Astrocyte of the cerebellum (primary cell): ENCODE measurements at regions of chr14 and their contacts with region 1.

Region 1: GRCh38 chr14:33529787-33530757 is 420.8 kb downstream of the EGLN3 start:
- DNase-seq: no peak
- H3K4me3 ChIP-seq: no peak overlapping the region
- CTCF ChIP-seq: no peak

Region 2: GRCh38 chr14:33165144-33165925 is 364.7 kb before region 1 on chr14:
- in situ Hi-C with region 1: no loop called
- DNase-seq: peak; percentile 62
- H3K4me3 ChIP-seq: no peak overlapping the region
- CTCF ChIP-seq: no peak

Region 3: DNA sequence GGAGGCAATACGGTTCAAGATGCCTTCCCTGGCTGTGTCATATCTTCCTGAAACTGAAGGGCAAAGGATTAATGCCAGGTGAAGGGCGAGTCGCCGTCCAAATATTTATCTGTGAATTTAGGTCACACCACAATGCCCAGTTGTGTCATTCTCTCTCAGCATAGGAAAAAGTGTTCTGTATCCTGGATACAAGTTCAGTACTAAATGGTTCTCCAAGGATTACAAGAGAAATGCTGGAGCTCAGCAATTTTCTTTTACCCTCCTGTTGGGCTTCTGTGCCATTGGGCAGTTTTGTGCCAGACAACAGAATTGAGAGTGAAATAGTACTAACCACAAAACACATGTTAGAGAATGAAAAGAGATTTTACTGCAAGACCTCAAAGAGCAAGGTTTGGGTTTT is 73.1 kb before region 1 on chr14:
- in situ Hi-C with region 1: loop called (anchors 5 kb)
- DNase-seq: no peak
- H3K4me3 ChIP-seq: no peak overlapping the region
- CTCF ChIP-seq: no peak

Region 4: GRCh38 chr14:33564774-33565630 is 34.9 kb after region 1 on chr14:
- in situ Hi-C with region 1: loop called (anchors 5 kb)
- DNase-seq: peak; percentile 49
- H3K4me3 ChIP-seq: no peak overlapping the region
- CTCF ChIP-seq: no peak